ENCODE measurements at regions of chr12 and their contacts with region 1.

Region 1: DNA sequence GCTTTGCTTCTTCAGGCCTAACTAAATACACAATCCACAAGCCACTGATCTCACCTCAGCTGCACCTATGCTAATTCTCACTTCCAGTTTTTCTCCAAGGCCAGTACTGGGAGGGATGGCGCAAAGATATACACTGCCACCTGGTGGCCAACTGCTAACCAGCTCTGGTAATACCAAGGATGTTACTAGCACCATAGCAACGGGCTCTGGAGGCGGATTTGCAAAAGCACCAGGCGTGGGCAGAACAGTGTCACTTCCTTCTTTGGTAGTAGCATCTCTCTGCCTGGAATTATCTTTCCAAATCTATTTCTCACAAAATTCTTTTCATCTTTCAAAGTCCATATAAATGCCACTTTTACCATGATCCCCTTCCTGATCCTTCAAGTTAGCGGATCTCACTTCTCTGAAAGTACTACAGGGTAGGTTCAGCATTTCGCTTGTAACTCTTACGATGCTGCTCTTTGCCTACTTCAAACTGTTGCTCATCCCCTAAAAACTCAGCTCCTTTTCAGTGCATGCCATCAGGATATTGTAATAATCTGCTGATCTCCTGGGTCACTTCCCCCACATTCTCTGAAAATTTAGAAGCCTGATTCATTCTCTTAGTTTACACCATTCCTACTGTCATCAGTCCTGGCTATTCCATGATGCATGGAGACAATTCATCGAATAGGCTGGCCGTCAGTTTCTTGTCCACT is 37.1 kb upstream of the FOXJ2 start:
- DNase-seq: peak; percentile 71 to 95 (median 86)
- H3K4me3 ChIP-seq: no peak overlapping the region
- H3K27ac ChIP-seq: peak overlapping the region in 2 of 5 donors; percentile 18 to 54
- H3K4me1 ChIP-seq: no peaks in the 10 kb centered on the region
- H3K27me3 ChIP-seq: no peaks in the 10 kb centered on the region
- CTCF ChIP-seq: peak; percentile 66 to 96 (median 86)
- POLR2A ChIP-seq: no peak

Region 2: DNA sequence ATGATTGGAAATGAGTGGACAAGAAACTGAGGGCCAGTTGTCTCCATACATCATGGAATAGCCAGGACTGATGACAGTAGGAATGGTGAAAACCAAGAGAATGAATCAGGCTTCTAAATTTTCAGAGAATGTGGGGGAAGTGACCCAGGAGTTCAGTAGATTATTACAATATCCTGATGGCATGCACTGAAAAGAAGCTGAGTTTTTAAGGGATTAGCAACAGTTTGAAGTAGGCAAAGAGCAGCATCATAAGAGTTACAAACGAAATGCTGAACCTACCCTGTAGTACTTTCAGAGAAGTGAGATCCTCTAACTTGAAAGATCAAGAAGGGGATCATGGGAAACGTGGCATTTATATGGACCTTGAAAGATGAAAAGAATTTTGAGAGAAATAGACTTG is 135.9 kb before region 1 on chr12:
- intact Hi-C with region 1: loop called (anchors 2 to 10 kb)
- DNase-seq: no peak
- H3K4me3 ChIP-seq: no peak overlapping the region
- H3K27ac ChIP-seq: peak overlapping the region in 1 of 5 donors; percentile 76
- H3K4me1 ChIP-seq: no peaks in the 10 kb centered on the region
- H3K27me3 ChIP-seq: no peaks in the 10 kb centered on the region
- CTCF ChIP-seq: no peak
- POLR2A ChIP-seq: no peak

Region 3: GRCh38 chr12:7933255-7933729 is 62.1 kb before region 1 on chr12:
- intact Hi-C with region 1: loop called (anchors 10 kb)
- DNase-seq: peak; percentile 59 to 90 (median 71)
- H3K4me3 ChIP-seq: peak overlapping the region in 1 of 4 donors; percentile 70
- H3K27ac ChIP-seq: peak overlapping the region in 4 of 5 donors; percentile 1 to 84 (median 64)
- H3K4me1 ChIP-seq: no peaks in the 10 kb centered on the region
- H3K27me3 ChIP-seq: no peaks in the 10 kb centered on the region
- CTCF ChIP-seq: peak; percentile 48 to 83 (median 68)
- POLR2A ChIP-seq: no peak

Region 4: DNA sequence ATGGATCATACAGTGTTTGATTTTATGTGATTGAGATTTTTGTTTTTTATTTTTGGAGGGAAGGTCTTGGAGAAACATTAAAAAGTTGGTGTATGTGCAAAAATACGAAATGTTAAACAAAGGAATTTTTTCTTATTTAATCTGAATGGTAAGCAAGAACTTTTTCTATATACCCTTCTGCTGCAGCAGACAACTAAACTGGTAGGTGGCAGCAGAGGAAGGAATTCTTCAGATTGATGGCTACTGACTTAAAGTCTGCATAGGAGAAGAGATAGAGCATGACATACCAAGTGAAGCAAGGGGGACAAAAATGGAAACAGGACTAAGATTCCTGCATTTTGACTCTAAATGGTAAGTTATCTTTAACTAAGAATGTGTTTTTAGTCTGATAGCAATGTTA is 785.0 kb after region 1 on chr12:
- intact Hi-C with region 1: no loop called
- DNase-seq: no peak
- H3K4me3 ChIP-seq: no peak overlapping the region
- H3K27ac ChIP-seq: no peak overlapping the region
- H3K4me1 ChIP-seq: peaks cover 8 to 13% of the 10 kb centered on the region in 2 donors
- H3K27me3 ChIP-seq: no peaks in the 10 kb centered on the region
- CTCF ChIP-seq: peak in 5 of 6 experiments; percentile 13 to 30 (median 21)
- POLR2A ChIP-seq: no peak

Measured in adrenal gland (tissue), 19 donors.